ENCODE measurements at regions of chr1 and their contacts with region 1.

Region 1: GRCh38 chr1:201119206-201120197 is 7.3 kb upstream of the CACNA1S start:
- DNase-seq: peak; percentile 47
- H3K4me3 ChIP-seq: no peak overlapping the region
- H3K27ac ChIP-seq: no peak overlapping the region
- H3K4me1 ChIP-seq: no peaks in the 10 kb centered on the region
- H3K27me3 ChIP-seq: peaks cover 36 to 55% of the 10 kb centered on the region in 2 experiments
- CTCF ChIP-seq: peak; percentile 69 to 79
- POLR2A ChIP-seq: no peak

Region 2: DNA sequence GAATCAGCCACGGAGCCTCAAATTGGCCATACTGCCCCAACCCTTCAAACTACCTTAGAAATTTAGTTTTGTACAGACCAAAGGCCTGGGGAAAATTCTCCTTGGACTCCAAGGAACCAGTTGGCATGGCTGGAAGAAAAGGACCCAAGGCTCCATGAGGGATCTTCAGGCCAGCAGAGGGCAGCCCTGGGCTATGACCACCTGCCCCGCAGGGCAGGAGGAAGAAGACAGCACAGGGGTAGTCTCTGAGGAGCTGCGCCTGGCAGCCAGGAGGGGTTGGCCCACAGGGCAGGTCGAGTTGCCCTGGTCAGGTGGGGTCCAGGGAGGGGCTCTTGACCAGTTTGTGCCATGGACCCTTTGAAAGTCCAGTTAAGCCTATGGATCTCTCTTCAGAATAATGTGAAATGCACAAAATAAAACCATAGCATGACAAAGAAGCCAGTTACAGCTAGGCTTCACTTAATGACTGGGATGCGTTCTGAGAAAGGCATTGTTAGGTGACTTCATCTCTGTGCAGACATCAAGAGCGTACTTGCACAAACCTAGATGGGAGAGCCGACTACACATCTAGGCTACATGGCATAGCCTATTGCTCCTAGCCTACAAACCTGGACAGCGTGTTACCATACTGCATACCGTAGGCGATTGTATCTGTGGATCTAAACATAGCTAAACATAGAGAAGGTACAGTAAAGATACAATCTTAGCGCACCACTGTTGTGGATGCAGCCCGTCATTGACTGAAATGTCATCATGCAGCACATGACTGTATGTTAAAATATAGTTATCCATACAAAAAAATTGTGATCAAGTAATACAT is 33.4 kb before region 1 on chr1:
- CTCF ChIA-PET with region 1: interaction called, 54 read pairs
- POLR2A ChIA-PET with region 1: no interaction called
- dilution Hi-C with region 1: no loop called
- intact Hi-C with region 1: loop called (anchors 1 kb)
- DNase-seq: peak; percentile 31
- H3K4me3 ChIP-seq: no peak overlapping the region
- H3K27ac ChIP-seq: no peak overlapping the region
- H3K4me1 ChIP-seq: no peaks in the 10 kb centered on the region
- H3K27me3 ChIP-seq: peaks cover 7% of the 10 kb centered on the region in 2 experiments
- CTCF ChIP-seq: peak; percentile 36 to 70
- POLR2A ChIP-seq: no peak

Region 3: DNA sequence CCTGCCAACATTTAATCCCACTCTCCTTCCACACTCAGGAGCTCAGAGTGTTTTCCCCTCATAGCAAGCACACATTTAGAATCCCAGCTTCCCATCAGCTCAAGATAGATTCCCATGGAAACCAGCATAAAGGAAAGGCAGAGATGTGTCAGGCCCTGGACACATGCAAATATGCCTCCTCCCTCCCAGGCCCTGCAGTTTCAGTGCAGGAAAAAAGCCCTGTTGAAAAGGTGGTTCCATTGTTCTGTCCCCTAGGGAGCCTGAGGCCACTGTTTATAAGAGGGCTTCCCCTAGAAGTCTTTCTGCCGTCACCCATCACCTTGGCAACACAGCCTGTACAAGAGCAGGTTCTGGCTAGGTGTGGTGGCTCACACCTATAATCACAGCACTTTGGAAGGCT is 10.9 kb before region 1 on chr1:
- CTCF ChIA-PET with region 1: interaction called, 11 read pairs
- POLR2A ChIA-PET with region 1: no interaction called
- dilution Hi-C with region 1: no loop called
- intact Hi-C with region 1: no loop called
- DNase-seq: no peak
- H3K4me3 ChIP-seq: no peak overlapping the region
- H3K27ac ChIP-seq: no peak overlapping the region
- H3K4me1 ChIP-seq: no peaks in the 10 kb centered on the region
- H3K27me3 ChIP-seq: peaks cover 8 to 13% of the 10 kb centered on the region in 2 experiments
- CTCF ChIP-seq: no peak
- POLR2A ChIP-seq: no peak

Region 4: GRCh38 chr1:201149400-201149799 is 29.9 kb after region 1 on chr1:
- CTCF ChIA-PET with region 1: interaction called, 11 read pairs
- POLR2A ChIA-PET with region 1: no interaction called
- dilution Hi-C with region 1: no loop called
- intact Hi-C with region 1: no loop called
- DNase-seq: peak; percentile 29
- H3K4me3 ChIP-seq: no peak overlapping the region
- H3K27ac ChIP-seq: no peak overlapping the region
- H3K4me1 ChIP-seq: peaks cover 5% of the 10 kb centered on the region
- H3K27me3 ChIP-seq: no peaks in the 10 kb centered on the region
- CTCF ChIP-seq: peak in 1 of 2 donors; percentile 30
- POLR2A ChIP-seq: no peak